ENCODE measurements at regions of chr20 and their contacts with region 1.

Region 1: GRCh38 chr20:39049684-39050554 is 87.8 kb downstream of the DHX35 start:
- DNase-seq: peak; percentile 51
- ATAC-seq: peak; percentile 91
- H3K4me3 ChIP-seq: peak overlapping the region; percentile 71
- H3K27ac ChIP-seq: peak overlapping the region; percentile 71
- H3K4me1 ChIP-seq: peaks cover 2% of the 10 kb centered on the region; the same call in 1 of the 2 replicates
- H3K27me3 ChIP-seq: peaks cover 3% of the 10 kb centered on the region; the same call in 1 of the 2 replicates
- CTCF ChIP-seq: peak; percentile 96
- POLR2A ChIP-seq: no peak
- RAD21 ChIP-seq: peak; percentile 89

Region 2: GRCh38 chr20:38355151-38356012 is 694.5 kb before region 1 on chr20:
- CTCF ChIA-PET with region 1: no interaction called
- POLR2A ChIA-PET with region 1: no interaction called
- dilution Hi-C with region 1: no loop called
- in situ Hi-C with region 1: no loop called
- intact Hi-C with region 1: no loop called
- DNase-seq: no peak
- ATAC-seq: no peak
- H3K4me3 ChIP-seq: no peak overlapping the region
- H3K27ac ChIP-seq: no peak overlapping the region
- H3K4me1 ChIP-seq: no peaks in the 10 kb centered on the region; the same call in 1 of the 2 replicates
- H3K27me3 ChIP-seq: peaks cover 2% of the 10 kb centered on the region
- CTCF ChIP-seq: no peak
- POLR2A ChIP-seq: no peak
- RAD21 ChIP-seq: no peak

Region 3: GRCh38 chr20:38926142-38926933 is 123.6 kb before region 1 on chr20 and contains the start of gene FAM83D:
- CTCF ChIA-PET with region 1: interaction called, 4 read pairs
- POLR2A ChIA-PET with region 1: no interaction called
- dilution Hi-C with region 1: no loop called
- in situ Hi-C with region 1: loop called (anchors 10 kb)
- intact Hi-C with region 1: loop called (anchors 1 kb)
- DNase-seq: peak; percentile 97
- ATAC-seq: peak; percentile 99
- H3K4me3 ChIP-seq: peak within 1 kb of the TSS; percentile 66
- H3K27ac ChIP-seq: peak within 1 kb of the TSS; percentile 12; the same call in 1 of the 2 replicates
- H3K4me1 ChIP-seq: peaks cover 5% of the 10 kb centered on the region
- H3K27me3 ChIP-seq: peaks cover 8% of the 10 kb centered on the region
- CTCF ChIP-seq: peak; percentile 83; the same call in 1 of the 2 replicates
- POLR2A ChIP-seq: peak; percentile 93
- RAD21 ChIP-seq: no peak; the same call in none of the 2 replicates
- total RNA-seq, gene FAM83D: 20.4 and 23.1 TPM in 2 replicates

Region 4: GRCh38 chr20:38962044-38962927 is 87.6 kb before region 1 on chr20 and contains the start of gene DHX35:
- CTCF ChIA-PET with region 1: interaction called, 6 read pairs
- POLR2A ChIA-PET with region 1: no interaction called
- dilution Hi-C with region 1: no loop called
- in situ Hi-C with region 1: no loop called
- intact Hi-C with region 1: loop called (anchors 1 kb)
- DNase-seq: peak; percentile 94
- ATAC-seq: peak; percentile 100
- H3K4me3 ChIP-seq: peak within 1 kb of the TSS; percentile 90
- H3K27ac ChIP-seq: peak within 1 kb of the TSS; percentile 83
- H3K4me1 ChIP-seq: 0 out of 2 replicates have a peak, but pooled peaks cover 2% of the 10 kb centered on the region
- H3K27me3 ChIP-seq: no peaks in the 10 kb centered on the region
- CTCF ChIP-seq: peak; percentile 38
- POLR2A ChIP-seq: peak; percentile 31; the same call in 1 of the 2 replicates
- RAD21 ChIP-seq: peak; percentile 43
- total RNA-seq, gene DHX35: 8.1 and 9.1 TPM in 2 replicates

Region 5: DNA sequence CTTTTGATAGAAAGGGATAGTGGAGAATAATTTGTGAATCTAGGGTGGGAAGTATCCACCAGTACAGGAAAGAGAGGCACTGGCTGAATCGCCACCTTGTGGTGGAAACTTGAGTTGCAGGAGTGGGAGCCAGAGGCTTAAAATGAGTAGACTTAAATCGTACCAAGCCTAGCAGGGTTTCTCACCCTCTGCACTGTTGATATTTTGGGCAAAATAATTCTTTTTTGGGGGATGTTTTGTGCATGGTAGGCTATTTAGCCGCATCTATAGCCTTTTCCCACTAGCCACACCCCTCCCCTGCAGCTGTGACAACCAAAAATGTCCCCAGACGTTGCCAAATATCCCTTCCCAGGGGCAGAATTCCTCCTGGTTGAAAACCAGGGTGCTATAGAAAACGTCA is 31.3 kb after region 1 on chr20:
- CTCF ChIA-PET with region 1: interaction called, 31 read pairs
- POLR2A ChIA-PET with region 1: no interaction called
- dilution Hi-C with region 1: no loop called
- in situ Hi-C with region 1: no loop called
- intact Hi-C with region 1: loop called (anchors 1 kb)
- DNase-seq: peak; percentile 75
- ATAC-seq: peak; percentile 99
- H3K4me3 ChIP-seq: no peak overlapping the region
- H3K27ac ChIP-seq: no peak overlapping the region
- H3K4me1 ChIP-seq: no peaks in the 10 kb centered on the region
- H3K27me3 ChIP-seq: peaks cover 16% of the 10 kb centered on the region
- CTCF ChIP-seq: peak; percentile 85
- POLR2A ChIP-seq: no peak
- RAD21 ChIP-seq: peak; percentile 69

Region 6: DNA sequence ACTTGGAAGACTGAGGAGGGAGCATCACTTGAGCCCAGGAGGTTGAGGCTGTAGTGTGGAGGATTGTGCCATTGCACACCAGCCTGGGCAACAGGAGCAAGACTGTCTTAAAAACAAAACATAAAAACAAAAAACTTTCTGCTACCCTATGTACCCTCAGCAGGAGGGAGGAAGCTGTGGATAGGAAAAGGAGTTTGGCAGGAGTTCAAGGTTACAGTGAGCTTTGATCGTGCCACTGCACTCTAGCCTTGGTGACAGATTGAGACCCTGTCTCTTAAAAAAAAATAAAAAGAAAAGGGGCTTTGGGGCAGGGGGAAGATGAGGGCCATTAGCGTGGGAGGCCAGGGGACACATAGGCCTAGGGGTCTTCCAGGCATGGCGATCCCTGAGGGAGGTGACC is 48.0 kb after region 1 on chr20:
- CTCF ChIA-PET with region 1: no interaction called
- POLR2A ChIA-PET with region 1: no interaction called
- dilution Hi-C with region 1: no loop called
- in situ Hi-C with region 1: no loop called
- intact Hi-C with region 1: no loop called
- DNase-seq: no peak
- ATAC-seq: no peak
- H3K4me3 ChIP-seq: no peak overlapping the region
- H3K27ac ChIP-seq: no peak overlapping the region
- H3K4me1 ChIP-seq: no peaks in the 10 kb centered on the region
- H3K27me3 ChIP-seq: peaks cover 3% of the 10 kb centered on the region; the same call in 1 of the 2 replicates
- CTCF ChIP-seq: no peak
- POLR2A ChIP-seq: no peak
- RAD21 ChIP-seq: no peak